Ascending aorta (tissue), 2 donors: ENCODE measurements at regions of chr4 and their contacts with region 1.

Region 1: DNA sequence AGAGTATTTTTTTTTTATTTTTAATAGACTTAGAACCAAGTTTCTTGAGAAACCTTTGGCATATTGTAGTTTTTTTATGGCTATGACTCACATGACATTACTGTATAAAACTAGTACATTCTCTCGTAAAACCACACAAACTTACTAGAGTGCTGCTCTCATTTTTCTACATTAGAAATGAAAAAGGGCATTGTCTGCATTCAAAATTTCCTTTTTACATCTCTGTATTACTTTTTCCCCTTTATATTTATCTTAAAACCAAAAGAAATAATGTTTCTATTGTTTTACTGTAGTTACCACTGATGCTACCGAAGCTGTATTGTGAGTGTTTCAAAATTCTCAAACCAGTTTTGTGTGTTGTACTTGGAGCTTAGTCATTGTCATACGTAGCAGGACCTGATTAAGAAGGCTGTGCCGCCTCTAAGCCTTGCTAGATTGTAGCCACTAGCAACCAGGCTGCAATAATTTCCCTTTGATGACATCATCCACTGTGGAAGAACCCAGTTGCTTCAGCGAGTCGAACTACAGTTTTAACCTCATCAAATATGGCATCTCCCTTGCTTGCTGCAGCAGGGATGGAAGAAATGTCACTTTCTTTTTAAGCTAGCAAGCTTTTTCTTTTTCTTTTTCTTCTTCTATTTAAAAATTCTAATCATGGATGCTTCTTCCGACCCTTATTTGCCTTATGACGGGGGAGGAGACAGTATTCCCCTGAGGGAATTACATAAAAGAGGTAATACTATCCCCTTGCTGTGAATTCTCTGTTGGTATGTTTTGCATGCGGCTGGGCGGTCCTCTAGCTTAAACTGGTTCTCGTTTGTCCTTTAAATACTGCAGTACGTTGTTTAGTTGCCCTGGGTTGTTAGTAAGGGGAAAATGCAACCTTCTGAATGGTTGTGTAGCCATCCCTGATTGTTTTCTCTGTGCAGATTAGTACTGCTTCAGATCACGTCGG is 39.6 kb downstream of the CLCN3 start:
- DNase-seq: peak; percentile 51 to 93
- H3K4me3 ChIP-seq: peak overlapping the region; percentile 42 to 61
- H3K27ac ChIP-seq: peak overlapping the region; percentile 37 to 71
- H3K4me1 ChIP-seq: peaks cover 0 to 7% of the 10 kb centered on the region in 2 donors
- H3K27me3 ChIP-seq: no peaks in the 10 kb centered on the region
- CTCF ChIP-seq: no peak

Region 2: GRCh38 chr4:169612871-169613859 is 46.8 kb before region 1 on chr4:
- intact Hi-C with region 1: loop called (anchors 2 kb)
- DNase-seq: peak; percentile 30 to 89
- H3K4me3 ChIP-seq: peak overlapping the region; percentile 74 to 88
- H3K27ac ChIP-seq: peak overlapping the region; percentile 90 to 97
- H3K4me1 ChIP-seq: peaks cover 0 to 9% of the 10 kb centered on the region in 2 donors
- H3K27me3 ChIP-seq: no peaks in the 10 kb centered on the region
- CTCF ChIP-seq: peak; percentile 34 to 75 (median 64)

Region 3: GRCh38 chr4:169619959-169620879 is 39.8 kb before region 1 on chr4 and contains the start of gene CLCN3:
- intact Hi-C with region 1: loop called (anchors 2 kb)
- DNase-seq: peak; percentile 92 to 98
- H3K4me3 ChIP-seq: peak within 1 kb of the TSS; percentile 65 to 88
- H3K27ac ChIP-seq: peak within 1 kb of the TSS; percentile 90 to 92
- H3K4me1 ChIP-seq: peaks cover 0 to 5% of the 10 kb centered on the region in 2 donors
- H3K27me3 ChIP-seq: no peaks in the 10 kb centered on the region
- CTCF ChIP-seq: peak in 2 of 3 experiments; percentile 9 to 22
- total RNA-seq, gene CLCN3: 13.8 TPM

Region 4: GRCh38 chr4:169757575-169758184 is 97.7 kb after region 1 on chr4 and contains the start of gene HPF1:
- intact Hi-C with region 1: loop called (anchors 5 kb)
- DNase-seq: peak; percentile 76 to 96
- H3K4me3 ChIP-seq: peak within 1 kb of the TSS; percentile 65 to 91
- H3K27ac ChIP-seq: peak within 1 kb of the TSS; percentile 40 to 68
- H3K4me1 ChIP-seq: peaks cover 0 to 13% of the 10 kb centered on the region in 2 donors
- H3K27me3 ChIP-seq: no peaks in the 10 kb centered on the region
- CTCF ChIP-seq: no peak
- total RNA-seq, gene HPF1: 0.53 TPM